ENCODE measurements at regions of chr12 and their contacts with region 1.

Region 1: DNA sequence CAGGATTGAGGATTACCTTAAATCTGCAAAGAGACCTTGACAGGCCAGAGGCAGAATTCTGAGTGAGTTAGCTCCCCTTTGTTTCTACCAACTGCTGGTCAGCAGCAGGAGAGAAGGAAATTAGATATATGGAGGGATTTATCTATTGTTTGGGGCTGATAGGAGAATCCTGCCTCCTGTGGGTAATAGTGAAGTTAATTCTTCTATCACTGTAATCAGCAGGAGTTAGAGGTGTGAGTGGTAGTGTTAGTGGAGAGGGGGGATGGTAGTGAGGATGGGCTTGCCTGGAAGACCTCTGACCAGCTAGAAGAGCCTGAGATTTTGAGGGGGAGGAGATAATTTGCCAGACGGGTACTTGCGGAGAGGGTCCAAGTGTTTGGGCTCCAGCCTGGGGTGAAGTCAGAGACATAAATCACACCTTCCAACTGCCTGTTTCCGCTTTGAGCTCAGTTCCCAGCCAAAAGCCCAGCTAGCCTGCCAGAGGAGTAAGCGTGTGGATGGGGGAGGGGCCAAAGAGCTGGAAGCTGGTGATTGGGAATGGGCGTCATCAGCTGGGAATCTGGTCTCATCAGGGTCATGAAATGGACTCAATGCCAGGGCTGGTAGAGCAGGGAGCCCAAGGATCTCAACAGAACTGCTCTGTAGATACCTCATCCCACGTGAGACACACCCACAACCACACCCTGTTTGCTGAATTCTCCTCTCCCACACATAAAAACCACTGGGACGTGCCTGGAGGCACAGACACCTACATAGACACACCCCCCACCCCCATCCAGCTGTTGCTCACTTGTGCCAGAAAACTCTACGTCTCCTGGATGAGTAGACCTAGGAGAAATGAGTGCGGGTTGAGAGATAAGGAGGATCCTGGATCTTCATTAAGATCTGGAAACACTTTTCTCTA is 13.1 kb upstream of the ITGA5 start:
- DNase-seq: peak in 1 of 9 donors; percentile 49
- ATAC-seq: no peak
- H3K4me3 ChIP-seq: no peak overlapping the region
- H3K4me3 Mint-ChIP-seq: peak overlapping the region in 2 of 10 donors; percentile 5 to 80
- H3K27ac ChIP-seq: no peak overlapping the region
- H3K27ac Mint-ChIP-seq: peak overlapping the region in 5 of 9 donors; percentile 7 to 87 (median 49)
- H3K4me1 ChIP-seq: peaks cover 13 to 23% of the 10 kb centered on the region in 2 donors
- H3K4me1 Mint-ChIP-seq: peaks cover 20 to 56% (median 38%) of the 10 kb centered on the region in 7 donors
- H3K27me3 ChIP-seq: no peaks in the 10 kb centered on the region
- H3K27me3 Mint-ChIP-seq: peaks cover 0 to 13% (median 0%) of the 10 kb centered on the region in 5 donors

Region 2: GRCh38 chr12:54419088-54419892 is 12.9 kb before region 1 on chr12 and contains the start of gene ITGA5:
- CTCF ChIA-PET with region 1: interaction called, 111 read pairs
- POLR2A ChIA-PET with region 1: interaction called, 27 read pairs
- intact Hi-C with region 1: no loop called
- DNase-seq: peak in 4 of 9 donors; percentile 16 to 53 (median 28)
- ATAC-seq: peak; percentile 48
- H3K4me3 ChIP-seq: peak within 1 kb of the TSS; percentile 86
- H3K4me3 Mint-ChIP-seq: peak within 1 kb of the TSS; percentile 78 to 98 (median 94)
- H3K27ac ChIP-seq: peak within 1 kb of the TSS; percentile 96
- H3K27ac Mint-ChIP-seq: peak within 1 kb of the TSS; percentile 87 to 100 (median 97)
- H3K4me1 ChIP-seq: peaks cover 44 to 49% of the 10 kb centered on the region in 2 donors
- H3K4me1 Mint-ChIP-seq: peaks cover 34 to 63% (median 52%) of the 10 kb centered on the region in 7 donors
- H3K27me3 ChIP-seq: no peaks in the 10 kb centered on the region
- H3K27me3 Mint-ChIP-seq: peaks cover 0 to 24% (median 0%) of the 10 kb centered on the region in 5 donors
- total RNA-seq, gene ITGA5: 73.9 to 169 (median 145) TPM

Region 3: GRCh38 chr12:54616933-54617680 is 184.9 kb after region 1 on chr12:
- CTCF ChIA-PET with region 1: no interaction called
- POLR2A ChIA-PET with region 1: no interaction called
- intact Hi-C with region 1: no loop called
- DNase-seq: no peak
- ATAC-seq: peak; percentile 63
- H3K4me3 ChIP-seq: no peak overlapping the region
- H3K4me3 Mint-ChIP-seq: no peak overlapping the region
- H3K27ac ChIP-seq: no peak overlapping the region
- H3K27ac Mint-ChIP-seq: no peak overlapping the region
- H3K4me1 ChIP-seq: no peaks in the 10 kb centered on the region
- H3K4me1 Mint-ChIP-seq: peaks cover 0 to 8% (median 0%) of the 10 kb centered on the region in 7 donors
- H3K27me3 ChIP-seq: no peaks in the 10 kb centered on the region
- H3K27me3 Mint-ChIP-seq: peaks cover 41 to 53% (median 44%) of the 10 kb centered on the region in 5 donors

Measured in naive thymus-derived CD4-positive, alpha-beta T cell (primary cell).